ENCODE measurements at regions of chr7 and their contacts with region 1.

Region 1: DNA sequence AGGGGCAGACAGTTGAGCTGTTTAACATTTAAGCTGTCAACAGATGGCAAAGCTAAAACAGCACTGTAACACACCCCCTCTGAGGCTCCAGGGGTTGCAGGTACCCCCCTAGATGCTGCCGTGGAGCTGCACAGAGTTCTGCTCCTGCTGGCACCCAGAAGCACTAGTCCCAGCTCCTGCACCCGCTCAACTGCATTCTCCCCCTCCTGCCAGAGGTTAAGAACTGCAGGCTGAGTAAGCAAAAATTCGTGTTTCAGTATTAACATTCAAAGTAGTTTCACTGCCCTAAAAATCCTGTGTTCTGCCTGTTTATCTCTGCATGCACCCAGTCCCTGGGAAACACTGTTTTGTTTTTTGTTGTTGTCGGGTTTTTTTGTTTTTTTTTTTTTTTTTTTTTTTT is 790.8 kb upstream of the KCND2 start:
- DNase-seq: peak; percentile 51
- H3K4me3 Mint-ChIP-seq: no peak overlapping the region
- H3K27ac Mint-ChIP-seq: no peak overlapping the region
- H3K4me1 Mint-ChIP-seq: no peaks in the 10 kb centered on the region
- H3K27me3 Mint-ChIP-seq: no peaks in the 10 kb centered on the region
- CTCF ChIP-seq: peak; percentile 46

Region 2: DNA sequence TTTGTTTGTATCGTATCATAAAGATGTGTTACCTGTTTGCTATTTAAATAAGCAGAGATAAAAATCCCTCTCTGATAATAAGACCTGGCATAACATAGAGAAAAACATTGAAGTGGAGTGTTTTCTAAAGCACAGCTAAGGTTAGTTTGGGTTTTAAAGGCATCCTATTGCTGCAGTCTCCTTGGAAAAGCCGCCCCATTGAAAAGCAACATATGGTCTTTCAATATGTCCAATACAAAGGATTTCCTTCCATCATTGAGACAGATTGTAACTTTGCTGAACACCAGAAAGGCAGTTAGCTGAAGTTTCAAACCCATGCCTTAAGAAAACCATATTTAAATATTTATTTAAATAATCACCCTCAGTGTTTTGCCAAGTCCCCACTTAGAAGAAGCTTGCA is 107.8 kb before region 1 on chr7:
- CTCF ChIA-PET with region 1: no interaction called
- intact Hi-C with region 1: no loop called
- DNase-seq: no peak
- H3K4me3 Mint-ChIP-seq: no peak overlapping the region
- H3K27ac Mint-ChIP-seq: no peak overlapping the region
- H3K4me1 Mint-ChIP-seq: no peaks in the 10 kb centered on the region
- H3K27me3 Mint-ChIP-seq: no peaks in the 10 kb centered on the region
- CTCF ChIP-seq: no peak

Region 3: GRCh38 chr7:119452401-119452800 is 29.8 kb before region 1 on chr7:
- CTCF ChIA-PET with region 1: no interaction called
- intact Hi-C with region 1: loop called (anchors 1 kb)
- DNase-seq: no peak
- H3K4me3 Mint-ChIP-seq: no peak overlapping the region
- H3K27ac Mint-ChIP-seq: no peak overlapping the region
- H3K4me1 Mint-ChIP-seq: peaks cover 16% of the 10 kb centered on the region
- H3K27me3 Mint-ChIP-seq: no peaks in the 10 kb centered on the region
- CTCF ChIP-seq: no peak

Region 4: GRCh38 chr7:119606297-119606696 is 124.1 kb after region 1 on chr7:
- CTCF ChIA-PET with region 1: no interaction called
- intact Hi-C with region 1: no loop called
- DNase-seq: no peak
- H3K4me3 Mint-ChIP-seq: no peak overlapping the region
- H3K27ac Mint-ChIP-seq: no peak overlapping the region
- H3K4me1 Mint-ChIP-seq: peaks cover 3% of the 10 kb centered on the region
- H3K27me3 Mint-ChIP-seq: no peaks in the 10 kb centered on the region
- CTCF ChIP-seq: no peak

Region 5: GRCh38 chr7:120554960-120555571 is 1072.9 kb after region 1 on chr7:
- CTCF ChIA-PET with region 1: no interaction called
- intact Hi-C with region 1: no loop called
- DNase-seq: peak; percentile 66
- H3K4me3 Mint-ChIP-seq: no peak overlapping the region
- H3K27ac Mint-ChIP-seq: no peak overlapping the region
- H3K4me1 Mint-ChIP-seq: no peaks in the 10 kb centered on the region
- H3K27me3 Mint-ChIP-seq: no peaks in the 10 kb centered on the region
- CTCF ChIP-seq: no peak

Measured in Calu3 (cell line).